ENCODE measurements at regions of chr11 and their contacts with region 1.

Region 1: GRCh38 chr11:103202048-103202651 is 92.9 kb downstream of the DYNC2H1 start:
- DNase-seq: peak; percentile 17
- H3K4me3 ChIP-seq: no peak overlapping the region
- H3K27ac ChIP-seq: no peak overlapping the region
- H3K4me1 ChIP-seq: no peaks in the 10 kb centered on the region
- H3K27me3 ChIP-seq: no peaks in the 10 kb centered on the region
- CTCF ChIP-seq: peak; percentile 70 to 86

Region 2: GRCh38 chr11:103125462-103125861 is 76.7 kb before region 1 on chr11:
- CTCF ChIA-PET with region 1: no interaction called
- dilution Hi-C with region 1: no loop called
- in situ Hi-C with region 1: no loop called
- intact Hi-C with region 1: no loop called
- DNase-seq: no peak
- H3K4me3 ChIP-seq: no peak overlapping the region
- H3K27ac ChIP-seq: no peak overlapping the region
- H3K4me1 ChIP-seq: no peaks in the 10 kb centered on the region
- H3K27me3 ChIP-seq: no peaks in the 10 kb centered on the region
- CTCF ChIP-seq: no peak

Region 3: GRCh38 chr11:104001561-104002056 is 799.5 kb after region 1 on chr11:
- CTCF ChIA-PET with region 1: interaction called, 23 read pairs
- dilution Hi-C with region 1: no loop called
- in situ Hi-C with region 1: no loop called
- intact Hi-C with region 1: no loop called
- DNase-seq: no peak
- H3K4me3 ChIP-seq: no peak overlapping the region
- H3K27ac ChIP-seq: no peak overlapping the region
- H3K4me1 ChIP-seq: no peaks in the 10 kb centered on the region
- H3K27me3 ChIP-seq: no peaks in the 10 kb centered on the region
- CTCF ChIP-seq: no peak

Measured in mammary epithelial cell (primary cell).